Activated naive CD4-positive, alpha-beta T cell treated with anti-CD3 and anti-CD28 coated beads for 36 hours (primary cell): ENCODE measurements at regions of chr1 and their contacts with region 1.

Region 1: GRCh38 chr1:111222308-111223125 is 5.0 kb upstream of the CHI3L2 start:
- DNase-seq: peak; percentile 90
- H3K4me3 Mint-ChIP-seq: peak overlapping the region; percentile 53
- H3K27ac Mint-ChIP-seq: peak overlapping the region; percentile 99
- H3K4me1 Mint-ChIP-seq: peaks cover 94% of the 10 kb centered on the region
- H3K27me3 Mint-ChIP-seq: no peaks in the 10 kb centered on the region

Region 2: GRCh38 chr1:111148376-111148881 is 74.1 kb before region 1 on chr1:
- CTCF ChIA-PET with region 1: interaction called, 3 read pairs
- intact Hi-C with region 1: loop called (anchors 1 kb)
- DNase-seq: no peak
- H3K4me3 Mint-ChIP-seq: no peak overlapping the region
- H3K27ac Mint-ChIP-seq: no peak overlapping the region
- H3K4me1 Mint-ChIP-seq: peaks cover 78% of the 10 kb centered on the region
- H3K27me3 Mint-ChIP-seq: no peaks in the 10 kb centered on the region

Region 3: DNA sequence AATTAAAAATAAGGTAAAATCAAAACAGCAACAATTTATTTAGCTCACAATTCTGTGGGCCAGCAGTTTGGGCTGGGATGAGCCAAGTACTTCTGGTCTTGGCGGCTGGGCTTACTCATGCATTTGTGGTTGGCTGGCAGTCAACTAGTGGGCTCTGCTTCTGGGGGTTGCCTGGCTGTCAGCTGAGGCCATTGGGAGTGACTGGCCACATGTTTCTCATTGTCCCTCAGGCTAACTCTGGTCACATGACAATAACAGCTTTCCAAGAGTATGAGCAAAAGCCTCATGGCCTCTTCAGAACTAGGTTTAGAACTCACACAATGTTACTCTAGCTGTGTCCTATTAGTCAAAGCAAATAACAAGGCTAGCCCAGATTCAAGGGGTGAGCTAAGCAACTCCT is 52.6 kb after region 1 on chr1:
- CTCF ChIA-PET with region 1: interaction called, 5 read pairs
- intact Hi-C with region 1: loop called (anchors 1 kb)
- DNase-seq: peak; percentile 46
- H3K4me3 Mint-ChIP-seq: no peak overlapping the region
- H3K27ac Mint-ChIP-seq: peak overlapping the region; percentile 32
- H3K4me1 Mint-ChIP-seq: peaks cover 47% of the 10 kb centered on the region
- H3K27me3 Mint-ChIP-seq: peaks cover 22% of the 10 kb centered on the region

Region 4: DNA sequence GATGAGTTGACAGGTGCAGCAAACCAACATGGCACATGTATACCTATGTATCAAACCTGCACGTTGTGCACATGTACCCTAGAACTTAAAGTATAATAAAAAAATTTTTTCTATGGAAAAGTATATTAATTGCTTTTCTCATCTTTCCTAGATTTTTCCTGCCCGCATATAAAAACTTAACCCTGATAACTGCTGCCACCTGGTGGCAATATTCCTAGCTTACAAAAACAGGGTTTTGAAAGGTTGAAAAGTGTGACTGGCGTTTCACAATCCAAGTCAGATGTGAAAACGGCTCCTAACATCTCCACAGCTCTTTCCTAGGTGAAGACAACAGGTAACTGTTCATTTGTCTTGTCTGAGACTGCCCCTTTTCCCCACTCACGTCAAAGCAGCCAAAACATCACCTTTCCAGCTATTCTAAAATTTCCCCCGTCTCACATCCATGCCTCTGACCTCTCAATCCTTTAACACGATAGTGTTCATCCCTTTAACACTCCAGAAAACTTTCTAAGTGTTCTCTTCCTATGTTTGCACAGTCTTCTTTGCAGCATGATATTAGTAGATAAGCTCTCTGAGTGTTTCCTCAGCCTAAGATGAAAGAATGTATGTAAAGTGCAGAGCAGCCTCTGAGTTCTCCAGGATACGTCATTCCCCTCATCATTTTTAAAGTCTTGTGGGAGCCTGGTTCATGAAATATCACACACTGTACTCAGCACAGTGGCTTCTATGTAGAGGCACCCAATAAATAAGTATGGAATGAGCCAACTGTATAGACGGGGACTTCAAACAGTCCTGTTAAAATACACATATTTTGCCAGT is 177.5 kb after region 1 on chr1:
- CTCF ChIA-PET with region 1: interaction called, 41 read pairs
- intact Hi-C with region 1: loop called (anchors 1 kb)
- DNase-seq: peak; percentile 66
- H3K4me3 Mint-ChIP-seq: no peak overlapping the region
- H3K27ac Mint-ChIP-seq: no peak overlapping the region
- H3K4me1 Mint-ChIP-seq: peaks cover 22% of the 10 kb centered on the region
- H3K27me3 Mint-ChIP-seq: no peaks in the 10 kb centered on the region

Region 5: GRCh38 chr1:111619635-111620440 is 397.3 kb after region 1 on chr1 and contains the start of gene RAP1A:
- CTCF ChIA-PET with region 1: no interaction called
- intact Hi-C with region 1: loop called (anchors 5 kb)
- DNase-seq: peak; percentile 97
- H3K4me3 Mint-ChIP-seq: peak within 1 kb of the TSS; percentile 93
- H3K27ac Mint-ChIP-seq: peak within 1 kb of the TSS; percentile 96
- H3K4me1 Mint-ChIP-seq: peaks cover 68% of the 10 kb centered on the region
- H3K27me3 Mint-ChIP-seq: no peaks in the 10 kb centered on the region
- total RNA-seq, gene RAP1A: 152 to 155 TPM

Region 6: GRCh38 chr1:111827946-111828538 is 605.5 kb after region 1 on chr1:
- CTCF ChIA-PET with region 1: no interaction called
- intact Hi-C with region 1: no loop called
- DNase-seq: no peak
- H3K4me3 Mint-ChIP-seq: no peak overlapping the region
- H3K27ac Mint-ChIP-seq: no peak overlapping the region
- H3K4me1 Mint-ChIP-seq: no peaks in the 10 kb centered on the region
- H3K27me3 Mint-ChIP-seq: peaks cover 15% of the 10 kb centered on the region

Region 7: DNA sequence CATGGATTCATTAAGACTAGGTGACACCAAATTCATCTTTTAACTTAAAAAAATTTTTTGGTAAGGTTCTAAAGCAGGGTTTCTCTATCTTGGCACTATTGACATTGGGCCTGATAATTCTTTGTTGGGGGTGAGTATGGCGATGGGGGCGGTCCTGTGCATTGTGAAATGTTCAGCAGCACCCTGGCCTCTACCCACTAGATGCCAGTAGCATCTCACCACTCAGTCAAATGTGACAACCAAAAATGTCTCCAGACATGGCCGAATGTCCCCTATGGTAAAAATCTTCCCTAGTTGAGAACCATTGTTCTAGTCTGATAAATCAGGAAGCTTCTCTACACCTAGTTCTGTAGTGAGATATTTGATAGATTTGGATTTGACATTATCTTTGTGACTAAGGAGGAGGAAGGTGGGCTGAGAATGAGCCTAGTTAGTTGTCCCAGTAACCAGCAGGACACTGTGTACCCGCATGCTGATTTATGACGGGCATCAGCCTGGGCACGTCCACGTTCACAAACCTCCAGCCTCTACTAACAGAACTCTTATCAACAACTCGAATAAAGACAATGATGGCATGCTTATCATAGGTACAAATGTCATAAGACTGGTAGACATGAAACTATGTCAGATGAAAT is 662.4 kb after region 1 on chr1:
- CTCF ChIA-PET with region 1: no interaction called
- intact Hi-C with region 1: no loop called
- DNase-seq: no peak
- H3K4me3 Mint-ChIP-seq: no peak overlapping the region
- H3K27ac Mint-ChIP-seq: no peak overlapping the region
- H3K4me1 Mint-ChIP-seq: peaks cover 4% of the 10 kb centered on the region
- H3K27me3 Mint-ChIP-seq: peaks cover 16% of the 10 kb centered on the region